Endothelial cell of umbilical vein (primary cell): ENCODE measurements at regions of chr10 and their contacts with region 1.

Region 1: DNA sequence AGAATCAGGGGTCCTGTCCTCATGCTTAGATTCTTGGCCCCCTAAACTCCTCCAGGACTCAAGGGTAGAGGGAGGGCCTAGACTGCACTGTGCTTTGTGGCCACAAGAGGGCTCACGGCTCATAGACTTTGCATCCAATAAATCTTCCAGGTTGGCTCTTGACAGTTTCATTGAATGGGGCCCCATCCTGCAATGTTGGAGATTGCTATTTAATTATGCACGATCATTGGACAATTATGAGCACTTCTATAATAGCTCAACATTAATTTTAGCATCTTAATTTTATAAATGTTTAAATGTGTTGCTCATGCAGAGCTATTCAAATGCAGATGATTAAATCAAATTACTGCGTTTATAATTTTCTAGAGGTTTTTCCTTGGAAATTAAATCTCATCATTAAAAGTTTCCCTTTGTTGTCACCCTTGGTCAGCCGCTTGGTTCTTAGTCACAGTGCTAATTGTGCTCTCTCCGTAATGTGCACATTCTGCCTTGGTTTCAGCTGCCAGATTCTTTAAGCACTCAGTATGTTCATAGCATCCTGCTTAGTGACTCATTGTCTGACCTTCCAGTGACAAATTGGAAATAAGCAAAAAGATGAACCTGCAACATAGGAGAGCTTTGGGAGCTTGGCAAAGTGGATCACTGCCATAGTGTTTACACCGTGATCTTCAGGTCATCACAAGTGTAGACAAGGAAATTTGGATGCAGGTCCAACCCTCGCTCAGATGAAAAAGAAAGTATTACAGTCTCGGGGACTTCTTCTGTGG is 33.4 kb upstream of the PLPP4 start:
- DNase-seq: peak; percentile 86
- H3K4me3 ChIP-seq: no peak overlapping the region
- H3K27ac ChIP-seq: peak overlapping the region; percentile 86
- H3K4me1 ChIP-seq: peaks cover 50% of the 10 kb centered on the region
- H3K27me3 ChIP-seq: no peaks in the 10 kb centered on the region
- CTCF ChIP-seq: peak; percentile 91 to 97
- POLR2A ChIP-seq: no peak

Region 2: GRCh38 chr10:120381931-120382330 is 41.7 kb before region 1 on chr10:
- CTCF ChIA-PET with region 1: no interaction called
- POLR2A ChIA-PET with region 1: no interaction called
- dilution Hi-C with region 1: no loop called
- intact Hi-C with region 1: no loop called
- DNase-seq: no peak
- H3K4me3 ChIP-seq: no peak overlapping the region
- H3K27ac ChIP-seq: no peak overlapping the region
- H3K4me1 ChIP-seq: no peaks in the 10 kb centered on the region
- H3K27me3 ChIP-seq: peaks cover 0 to 2% of the 10 kb centered on the region in 2 experiments
- CTCF ChIP-seq: no peak
- POLR2A ChIP-seq: no peak

Region 3: DNA sequence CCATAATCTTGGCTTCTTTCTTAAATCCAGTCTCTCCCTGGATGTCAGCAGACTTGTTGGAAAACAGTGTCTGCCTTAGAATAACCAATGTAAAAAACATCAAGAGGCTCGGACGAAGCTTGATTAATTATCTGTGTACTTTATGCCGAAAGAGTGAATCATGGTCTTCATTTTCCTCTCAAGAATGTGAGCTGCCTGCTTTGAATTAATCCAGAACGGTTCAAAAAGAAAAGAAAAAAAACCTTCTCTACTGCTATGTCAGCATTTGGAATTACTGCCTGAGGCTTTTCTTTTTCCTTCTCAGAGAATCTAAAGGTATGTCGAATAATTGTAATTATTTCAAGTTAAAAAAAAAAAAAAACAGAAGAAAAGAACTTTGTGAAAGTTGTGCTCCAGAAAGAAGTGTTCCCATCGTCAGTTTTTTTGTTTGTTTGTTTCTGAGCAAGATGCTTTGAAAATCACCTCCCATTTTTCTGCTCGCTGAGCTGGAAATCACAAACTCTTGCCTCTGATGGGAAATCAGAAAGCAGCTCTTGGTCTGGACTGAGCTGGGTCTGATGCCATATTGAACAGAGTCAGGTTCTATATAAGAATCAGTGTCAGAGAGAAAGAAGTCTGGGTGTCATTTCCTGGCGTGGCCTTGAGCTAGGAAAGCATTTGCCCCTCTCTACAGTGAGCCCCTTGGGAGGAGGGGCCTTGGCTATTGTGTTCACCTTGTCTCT is 53.6 kb after region 1 on chr10:
- CTCF ChIA-PET with region 1: interaction called, 12 read pairs
- POLR2A ChIA-PET with region 1: no interaction called
- dilution Hi-C with region 1: no loop called
- intact Hi-C with region 1: no loop called
- DNase-seq: no peak
- H3K4me3 ChIP-seq: no peak overlapping the region
- H3K27ac ChIP-seq: peak overlapping the region; percentile 51
- H3K4me1 ChIP-seq: peaks cover 23% of the 10 kb centered on the region
- H3K27me3 ChIP-seq: no peaks in the 10 kb centered on the region
- CTCF ChIP-seq: no peak
- POLR2A ChIP-seq: no peak

Region 4: DNA sequence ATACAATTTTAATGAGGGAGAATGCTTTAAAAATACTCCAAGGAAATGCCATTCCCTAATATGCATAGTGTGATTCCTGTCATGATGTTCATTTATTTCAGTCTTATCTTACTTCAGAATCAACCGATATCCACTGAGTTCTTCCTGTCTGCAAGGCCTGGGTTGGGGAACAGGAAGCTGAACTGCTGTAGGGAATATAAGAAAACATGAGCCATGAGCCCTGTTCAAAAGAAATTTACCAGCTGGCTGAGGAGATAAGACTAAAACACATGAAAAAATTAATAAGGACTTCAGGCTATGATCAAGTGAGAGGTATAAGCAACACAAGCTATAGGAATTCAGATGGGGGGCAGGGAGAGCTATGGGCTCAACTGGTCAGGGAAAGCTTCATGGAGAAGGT is 218.1 kb after region 1 on chr10:
- CTCF ChIA-PET with region 1: interaction called, 17 read pairs
- POLR2A ChIA-PET with region 1: no interaction called
- dilution Hi-C with region 1: no loop called
- intact Hi-C with region 1: loop called (anchors 2 kb)
- DNase-seq: peak; percentile 97
- H3K4me3 ChIP-seq: no peak overlapping the region
- H3K27ac ChIP-seq: peak overlapping the region; percentile 81
- H3K4me1 ChIP-seq: peaks cover 33% of the 10 kb centered on the region
- H3K27me3 ChIP-seq: no peaks in the 10 kb centered on the region
- CTCF ChIP-seq: no peak
- POLR2A ChIP-seq: peak; percentile 88

Region 5: GRCh38 chr10:120850911-120851865 is 427.6 kb after region 1 on chr10 and contains the start of gene WDR11:
- CTCF ChIA-PET with region 1: interaction called, 5 read pairs
- POLR2A ChIA-PET with region 1: no interaction called
- dilution Hi-C with region 1: no loop called
- intact Hi-C with region 1: loop called (anchors 1 kb)
- DNase-seq: peak; percentile 88
- H3K4me3 ChIP-seq: peak within 1 kb of the TSS; percentile 42 to 92 (median 87)
- H3K27ac ChIP-seq: peak within 1 kb of the TSS; percentile 64
- H3K4me1 ChIP-seq: peaks cover 11% of the 10 kb centered on the region
- H3K27me3 ChIP-seq: no peaks in the 10 kb centered on the region
- CTCF ChIP-seq: no peak
- POLR2A ChIP-seq: peak; percentile 95
- total RNA-seq, gene WDR11: 58.9 and 73.9 TPM in 2 replicates